Dorsolateral prefrontal cortex (tissue), 120 donors: ENCODE measurements at regions of chr6 and their contacts with region 1.

Region 1: GRCh38 chr6:12605888-12606345 is 110.7 kb upstream of the PHACTR1 start:
- DNase-seq: peak in 4 of 10 donors; percentile 26 to 63 (median 34)
- H3K4me3 ChIP-seq: peak overlapping the region in 4 of 59 donors; percentile 9 to 27 (median 22)
- H3K27ac ChIP-seq: no peak overlapping the region
- H3K27me3 ChIP-seq: no peaks in the 10 kb centered on the region
- CTCF ChIP-seq: peak; percentile 55 to 84 (median 72)

Region 2: GRCh38 chr6:11585426-11586016 is 1020.4 kb before region 1 on chr6:
- intact Hi-C with region 1: loop called in 1 of 2 experiments (anchors 5 kb)
- DNase-seq: no peak
- H3K4me3 ChIP-seq: no peak overlapping the region
- H3K27ac ChIP-seq: no peak overlapping the region
- H3K27me3 ChIP-seq: no peaks in the 10 kb centered on the region
- CTCF ChIP-seq: peak; percentile 49 to 85 (median 68)

Region 3: DNA sequence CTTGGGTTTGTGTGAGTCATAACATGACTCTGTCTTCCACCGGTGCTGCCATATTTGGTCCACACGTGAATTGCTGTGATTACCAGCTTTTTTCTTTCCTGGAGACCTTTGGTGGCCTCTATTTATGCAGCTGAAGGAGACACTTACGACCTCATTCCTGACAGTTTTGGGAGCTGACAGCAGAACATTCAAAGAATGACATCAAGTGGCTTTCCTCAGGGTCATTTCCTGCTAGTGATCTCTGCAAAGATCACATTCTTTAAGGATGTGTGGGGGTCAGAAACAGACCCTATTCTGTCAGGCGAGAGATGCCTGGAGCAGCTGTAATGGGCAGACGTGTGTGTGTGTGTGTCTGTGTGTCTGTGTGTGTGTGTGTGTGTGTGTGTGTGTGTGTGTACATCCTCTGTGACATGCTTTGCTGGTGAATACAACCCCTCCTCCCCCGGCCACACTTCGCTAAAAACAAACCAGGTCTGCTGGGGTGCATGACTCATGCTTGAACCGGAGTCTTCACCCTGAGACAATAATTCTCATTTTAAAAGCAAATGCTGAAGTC is 952.8 kb before region 1 on chr6:
- intact Hi-C with region 1: loop called (anchors 5 kb)
- DNase-seq: peak in 1 of 10 donors; percentile 11
- H3K4me3 ChIP-seq: no peak overlapping the region
- H3K27ac ChIP-seq: peak overlapping the region in 3 of 59 donors; percentile 7 to 31 (median 20)
- H3K27me3 ChIP-seq: no peaks in the 10 kb centered on the region
- CTCF ChIP-seq: no peak

Region 4: GRCh38 chr6:11900662-11901598 is 705.0 kb before region 1 on chr6:
- intact Hi-C with region 1: no loop called
- DNase-seq: no peak
- H3K4me3 ChIP-seq: no peak overlapping the region
- H3K27ac ChIP-seq: no peak overlapping the region
- H3K27me3 ChIP-seq: no peaks in the 10 kb centered on the region
- CTCF ChIP-seq: no peak

Region 5: DNA sequence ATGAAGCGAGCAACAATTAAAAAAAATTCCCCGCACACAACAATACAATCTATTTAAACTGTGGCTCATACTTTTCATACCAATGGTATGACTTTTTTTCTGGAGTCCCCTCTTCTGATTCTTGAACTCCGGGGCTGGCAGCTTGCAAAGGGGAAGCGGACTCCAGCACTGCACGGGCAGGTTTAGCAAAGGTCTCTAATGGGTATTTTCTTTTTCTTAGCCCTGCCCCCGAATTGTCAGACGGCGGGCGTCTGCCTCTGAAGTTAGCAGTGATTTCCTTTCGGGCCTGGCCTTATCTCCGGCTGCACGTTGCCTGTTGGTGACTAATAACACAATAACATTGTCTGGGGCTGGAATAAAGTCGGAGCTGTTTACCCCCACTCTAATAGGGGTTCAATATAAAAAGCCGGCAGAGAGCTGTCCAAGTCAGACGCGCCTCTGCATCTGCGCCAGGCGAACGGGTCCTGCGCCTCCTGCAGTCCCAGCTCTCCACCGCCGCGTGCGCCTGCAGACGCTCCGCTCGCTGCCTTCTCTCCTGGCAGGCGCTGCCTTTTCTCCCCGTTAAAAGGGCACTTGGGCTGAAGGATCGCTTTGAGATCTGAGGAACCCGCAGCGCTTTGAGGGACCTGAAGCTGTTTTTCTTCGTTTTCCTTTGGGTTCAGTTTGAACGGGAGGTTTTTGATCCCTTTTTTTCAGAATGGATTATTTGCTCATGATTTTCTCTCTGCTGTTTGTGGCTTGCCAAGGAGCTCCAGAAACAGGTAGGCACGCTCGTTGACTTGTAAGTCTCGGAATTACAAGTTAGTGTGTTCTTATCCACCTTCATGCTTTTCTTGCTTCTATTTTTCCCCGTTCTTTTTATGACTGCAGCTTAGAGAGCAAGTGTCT is 315.7 kb before region 1 on chr6 and contains the start of gene EDN1:
- intact Hi-C with region 1: loop called in 1 of 2 experiments (anchors 5 kb)
- DNase-seq: peak; percentile 39 to 79 (median 60)
- H3K4me3 ChIP-seq: peak within 1 kb of the TSS; percentile 26 to 74 (median 53)
- H3K27ac ChIP-seq: peak within 1 kb of the TSS in 19 of 59 donors; percentile 2 to 64 (median 30)
- H3K27me3 ChIP-seq: peaks cover 0 to 30% (median 12%) of the 10 kb centered on the region in 45 donors
- CTCF ChIP-seq: peak in 44 of 56 donors; percentile 5 to 57 (median 37)
- total RNA-seq, gene EDN1: 3.0 to 39.8 (median 9.7) TPM